Panc1 (cell line): ENCODE measurements at regions of chr4 and their contacts with region 1.

Region 1: DNA sequence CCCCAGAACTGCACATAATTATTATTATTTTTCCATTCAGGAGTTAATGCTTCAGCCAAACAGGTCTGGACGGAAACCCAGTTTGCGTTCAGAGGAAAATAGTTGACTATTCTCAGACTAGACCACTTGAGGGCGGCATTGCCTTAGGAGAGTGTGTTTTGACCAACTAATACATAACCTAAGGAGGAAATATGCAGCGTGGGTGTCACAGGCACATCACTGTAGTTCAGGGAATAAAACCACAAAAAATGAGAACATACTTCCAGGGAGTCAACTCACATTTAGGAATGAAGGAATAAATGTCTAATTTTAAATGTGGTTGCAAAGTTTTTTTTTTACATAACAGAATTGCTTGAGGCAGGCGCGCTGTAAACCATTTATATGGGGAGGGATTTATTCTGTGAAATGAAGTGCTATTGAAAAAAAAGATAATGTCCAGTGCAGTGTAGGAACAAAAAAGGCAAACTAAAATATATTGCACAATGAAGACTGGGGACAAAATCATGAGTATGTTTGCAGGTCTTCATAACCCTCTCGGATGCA is 93.3 kb downstream of the SYNPO2 start:
- DNase-seq: peak; percentile 27
- ATAC-seq: peak; percentile 86
- H3K4me3 ChIP-seq: no peak overlapping the region
- H3K27ac ChIP-seq: no peak overlapping the region
- H3K4me1 ChIP-seq: no peaks in the 10 kb centered on the region
- H3K27me3 ChIP-seq: no peaks in the 10 kb centered on the region
- CTCF ChIP-seq: peak; percentile 73

Region 2: GRCh38 chr4:119041951-119042560 is 60.1 kb after region 1 on chr4:
- CTCF ChIA-PET with region 1: no interaction called
- POLR2A ChIA-PET with region 1: no interaction called
- in situ Hi-C with region 1: no loop called
- intact Hi-C with region 1: loop called (anchors 5 kb)
- DNase-seq: peak; percentile 39
- ATAC-seq: peak; percentile 88
- H3K4me3 ChIP-seq: no peak overlapping the region
- H3K27ac ChIP-seq: no peak overlapping the region
- H3K4me1 ChIP-seq: no peaks in the 10 kb centered on the region
- H3K27me3 ChIP-seq: no peaks in the 10 kb centered on the region
- CTCF ChIP-seq: peak; percentile 76

Region 3: GRCh38 chr4:119053997-119054396 is 72.1 kb after region 1 on chr4:
- CTCF ChIA-PET with region 1: no interaction called
- POLR2A ChIA-PET with region 1: no interaction called
- in situ Hi-C with region 1: no loop called
- intact Hi-C with region 1: no loop called
- DNase-seq: no peak
- ATAC-seq: no peak
- H3K4me3 ChIP-seq: no peak overlapping the region
- H3K27ac ChIP-seq: no peak overlapping the region
- H3K4me1 ChIP-seq: no peaks in the 10 kb centered on the region
- H3K27me3 ChIP-seq: no peaks in the 10 kb centered on the region
- CTCF ChIP-seq: no peak

Region 4: DNA sequence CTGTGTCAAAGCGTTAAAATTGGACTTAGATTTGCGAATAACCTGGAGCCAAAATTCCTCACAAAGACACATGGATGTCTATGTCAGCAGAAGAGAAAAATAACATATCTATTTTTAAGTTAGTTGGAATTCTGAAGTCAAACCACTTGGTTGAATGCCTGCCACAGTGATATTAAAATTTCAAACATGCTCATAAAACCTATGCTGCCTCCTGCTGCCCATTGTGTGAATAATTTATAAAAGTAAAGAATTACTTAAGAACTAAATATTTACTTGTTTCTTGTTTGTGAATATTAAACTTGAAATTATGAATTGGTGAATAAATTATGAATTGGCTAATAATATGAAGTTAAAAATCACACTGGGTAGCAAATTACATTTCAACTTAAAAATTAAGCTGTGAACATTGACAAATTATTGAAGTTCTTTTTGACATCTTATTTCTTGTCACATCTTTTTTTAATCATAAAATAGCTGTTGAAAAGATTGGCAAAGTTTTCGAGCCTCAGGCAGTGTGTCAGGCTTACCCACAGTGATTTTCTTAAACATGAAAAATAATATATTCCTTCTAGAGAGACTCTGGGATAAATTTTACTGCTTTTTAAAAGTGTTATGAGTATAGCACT is 304.6 kb after region 1 on chr4:
- CTCF ChIA-PET with region 1: no interaction called
- POLR2A ChIA-PET with region 1: no interaction called
- in situ Hi-C with region 1: no loop called
- intact Hi-C with region 1: loop called (anchors 5 kb)
- DNase-seq: no peak
- ATAC-seq: no peak
- H3K4me3 ChIP-seq: no peak overlapping the region
- H3K27ac ChIP-seq: no peak overlapping the region
- H3K4me1 ChIP-seq: no peaks in the 10 kb centered on the region
- H3K27me3 ChIP-seq: no peaks in the 10 kb centered on the region
- CTCF ChIP-seq: peak; percentile 64; the same call in 1 of the 2 replicates

Region 5: GRCh38 chr4:119490335-119490734 is 508.4 kb after region 1 on chr4:
- CTCF ChIA-PET with region 1: interaction called, 3 read pairs
- POLR2A ChIA-PET with region 1: no interaction called
- in situ Hi-C with region 1: no loop called
- intact Hi-C with region 1: loop called (anchors 10 kb)
- DNase-seq: peak; percentile 2
- ATAC-seq: peak; percentile 83
- H3K4me3 ChIP-seq: no peak overlapping the region
- H3K27ac ChIP-seq: no peak overlapping the region
- H3K4me1 ChIP-seq: no peaks in the 10 kb centered on the region
- H3K27me3 ChIP-seq: no peaks in the 10 kb centered on the region
- CTCF ChIP-seq: peak; percentile 46; the same call in 1 of the 2 replicates